Ovary (tissue), 10 donors: ENCODE measurements at regions of chr3 and their contacts with region 1.

Region 1: DNA sequence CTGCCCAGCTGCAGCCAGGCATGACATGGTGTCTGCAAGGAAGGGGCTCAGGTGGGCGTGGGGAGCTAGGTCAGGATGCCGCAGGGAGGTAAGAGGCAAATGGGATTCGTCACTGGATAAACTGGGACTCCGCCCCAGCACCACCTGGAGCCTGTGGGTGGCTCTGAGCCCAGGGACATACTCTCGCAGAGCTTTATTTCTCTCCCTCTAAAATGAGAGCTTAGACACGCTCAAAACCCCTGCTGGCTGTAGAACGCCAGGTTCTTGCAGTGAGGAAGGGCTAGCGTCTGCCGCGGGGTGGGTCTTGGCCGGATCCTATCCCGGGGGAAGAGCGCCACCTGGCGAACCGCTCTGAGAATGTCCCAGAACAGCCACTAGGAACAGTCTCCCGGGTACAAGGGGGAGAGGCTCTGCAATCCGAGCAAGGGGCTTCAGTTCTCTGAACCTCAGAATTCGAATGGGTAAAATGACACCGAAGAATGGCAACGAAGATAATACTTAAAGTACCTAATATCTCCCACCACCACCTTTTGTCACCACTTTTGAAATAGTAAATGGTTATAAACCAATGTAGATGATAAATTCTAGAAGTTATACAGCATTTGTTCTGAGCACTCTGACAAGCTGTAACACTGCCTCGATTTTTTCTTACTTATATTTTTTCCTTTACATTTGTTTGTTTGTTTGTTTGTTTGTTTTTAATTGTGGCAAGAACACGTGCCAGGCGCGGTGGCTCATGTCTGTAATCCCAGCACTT is 53.2 kb upstream of the SRGAP3 start:
- DNase-seq: peak; percentile 80 to 92 (median 87)
- H3K4me3 ChIP-seq: peak overlapping the region; percentile 17
- H3K27ac ChIP-seq: no peak overlapping the region
- H3K4me1 ChIP-seq: peaks cover 2% of the 10 kb centered on the region
- H3K27me3 ChIP-seq: no peaks in the 10 kb centered on the region
- CTCF ChIP-seq: peak; percentile 92
- EP300 ChIP-seq: no peak
- POLR2A ChIP-seq: no peak

Region 2: GRCh38 chr3:8970971-8971589 is 331.5 kb before region 1 on chr3:
- intact Hi-C with region 1: loop called in 2 of 4 experiments (anchors 2 to 5 kb)
- DNase-seq: peak; percentile 48 to 76 (median 70)
- H3K4me3 ChIP-seq: no peak overlapping the region
- H3K27ac ChIP-seq: no peak overlapping the region
- H3K4me1 ChIP-seq: no peaks in the 10 kb centered on the region
- H3K27me3 ChIP-seq: no peaks in the 10 kb centered on the region
- CTCF ChIP-seq: peak; percentile 90 to 96 (median 95)
- EP300 ChIP-seq: no peak
- POLR2A ChIP-seq: no peak

Region 3: DNA sequence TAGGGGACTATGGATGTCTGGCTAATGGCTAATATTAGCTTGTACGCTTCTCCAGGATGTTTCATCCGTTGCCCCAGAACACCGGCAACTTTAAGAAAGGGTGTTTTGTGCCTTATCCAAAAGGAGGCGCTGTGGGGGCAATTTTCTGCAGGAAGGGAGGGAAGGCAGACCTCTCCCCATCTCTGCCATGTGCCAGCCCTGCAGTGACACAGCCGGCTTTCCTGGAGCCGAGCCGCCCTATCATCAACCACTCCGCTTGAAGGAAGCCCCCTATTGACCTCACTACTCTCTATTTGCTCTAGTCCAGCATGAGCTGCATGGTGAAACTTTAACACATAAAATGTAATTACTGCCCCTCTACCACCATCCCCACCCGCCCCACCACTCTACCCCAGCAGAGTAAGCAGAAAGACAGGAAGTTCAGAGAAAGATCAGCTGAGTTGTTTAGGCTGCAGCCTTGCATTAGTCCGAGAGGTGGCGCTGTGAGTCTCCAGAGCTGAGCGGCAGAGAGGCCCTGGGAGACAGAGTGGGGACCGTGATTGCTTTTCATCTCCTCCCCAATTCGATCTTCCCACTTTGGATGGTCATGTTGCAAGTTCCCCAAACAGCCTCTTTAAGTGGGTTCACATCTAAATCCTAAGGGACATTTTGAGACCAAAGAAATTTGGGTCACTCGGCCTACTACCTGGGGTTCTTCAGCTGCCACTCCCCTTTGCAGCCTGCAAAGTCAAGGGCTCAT is 314.8 kb before region 1 on chr3:
- intact Hi-C with region 1: loop called (anchors 5 kb)
- DNase-seq: peak; percentile 47 to 79 (median 69)
- H3K4me3 ChIP-seq: no peak overlapping the region
- H3K27ac ChIP-seq: no peak overlapping the region
- H3K4me1 ChIP-seq: no peaks in the 10 kb centered on the region
- H3K27me3 ChIP-seq: no peaks in the 10 kb centered on the region
- CTCF ChIP-seq: peak; percentile 38 to 48 (median 41)
- EP300 ChIP-seq: no peak
- POLR2A ChIP-seq: no peak

Region 4: DNA sequence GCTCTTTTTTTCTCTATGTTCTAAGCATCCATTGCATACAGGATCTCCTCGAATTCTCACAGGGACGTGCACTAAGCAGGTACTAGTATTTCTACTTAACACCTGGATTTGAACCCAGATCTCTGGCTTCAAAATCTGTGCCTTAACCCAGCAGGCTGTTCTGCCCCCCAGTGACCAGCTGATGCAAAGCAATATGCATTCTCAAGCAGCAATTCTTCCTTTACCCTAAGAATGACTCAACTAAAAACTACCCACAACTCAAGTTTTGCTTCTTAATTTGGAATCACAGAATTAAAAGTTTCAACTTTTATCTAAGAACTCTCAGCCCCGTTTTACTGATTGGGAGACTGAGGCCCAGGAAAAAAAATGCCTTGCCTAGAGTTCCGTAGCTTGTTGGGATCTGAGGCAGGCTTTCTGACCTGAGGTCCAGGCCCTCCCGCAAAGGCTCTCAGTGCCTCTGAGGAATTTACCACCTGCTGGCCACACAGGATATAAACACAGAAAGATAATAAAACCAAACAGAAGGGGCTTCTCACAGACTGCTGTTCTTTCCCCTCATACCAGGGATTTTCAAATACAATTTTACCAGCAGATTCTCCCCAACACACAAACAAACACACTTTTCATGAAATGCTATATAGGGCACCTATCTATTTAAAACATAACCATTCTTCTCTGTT is 223.9 kb before region 1 on chr3:
- intact Hi-C with region 1: loop called in 1 of 4 experiments (anchors 10 kb)
- DNase-seq: no peak
- H3K4me3 ChIP-seq: no peak overlapping the region
- H3K27ac ChIP-seq: no peak overlapping the region
- H3K4me1 ChIP-seq: no peaks in the 10 kb centered on the region
- H3K27me3 ChIP-seq: no peaks in the 10 kb centered on the region
- CTCF ChIP-seq: no peak
- EP300 ChIP-seq: no peak
- POLR2A ChIP-seq: no peak

Region 5: DNA sequence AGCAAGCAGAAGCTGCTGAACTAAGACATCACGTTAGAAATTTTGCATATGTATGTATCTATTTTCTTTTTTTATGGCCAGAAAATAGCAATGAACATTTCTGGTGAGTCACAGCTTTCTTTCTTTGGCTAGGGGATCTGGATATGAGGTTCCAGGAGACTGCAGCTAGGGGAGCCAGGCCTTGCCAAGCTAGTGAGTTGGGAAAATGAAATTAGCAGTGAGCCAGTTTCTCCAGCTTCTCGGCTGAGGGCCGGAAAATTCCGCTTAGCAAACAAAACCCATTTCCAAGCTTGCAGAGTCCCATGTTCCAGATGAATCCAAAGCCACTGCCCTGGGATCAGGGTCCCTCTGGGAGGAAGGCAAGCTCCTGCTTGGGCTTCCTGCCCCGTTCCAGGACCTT is 190.7 kb before region 1 on chr3:
- intact Hi-C with region 1: loop called in 1 of 4 experiments (anchors 5 kb)
- DNase-seq: peak; percentile 46 to 70 (median 61)
- H3K4me3 ChIP-seq: no peak overlapping the region
- H3K27ac ChIP-seq: no peak overlapping the region
- H3K4me1 ChIP-seq: peaks cover 9% of the 10 kb centered on the region
- H3K27me3 ChIP-seq: no peaks in the 10 kb centered on the region
- CTCF ChIP-seq: peak in 1 of 3 donors; percentile 29
- EP300 ChIP-seq: no peak
- POLR2A ChIP-seq: no peak